ENCODE measurements at regions of chr1 and their contacts with region 1.

Region 1: DNA sequence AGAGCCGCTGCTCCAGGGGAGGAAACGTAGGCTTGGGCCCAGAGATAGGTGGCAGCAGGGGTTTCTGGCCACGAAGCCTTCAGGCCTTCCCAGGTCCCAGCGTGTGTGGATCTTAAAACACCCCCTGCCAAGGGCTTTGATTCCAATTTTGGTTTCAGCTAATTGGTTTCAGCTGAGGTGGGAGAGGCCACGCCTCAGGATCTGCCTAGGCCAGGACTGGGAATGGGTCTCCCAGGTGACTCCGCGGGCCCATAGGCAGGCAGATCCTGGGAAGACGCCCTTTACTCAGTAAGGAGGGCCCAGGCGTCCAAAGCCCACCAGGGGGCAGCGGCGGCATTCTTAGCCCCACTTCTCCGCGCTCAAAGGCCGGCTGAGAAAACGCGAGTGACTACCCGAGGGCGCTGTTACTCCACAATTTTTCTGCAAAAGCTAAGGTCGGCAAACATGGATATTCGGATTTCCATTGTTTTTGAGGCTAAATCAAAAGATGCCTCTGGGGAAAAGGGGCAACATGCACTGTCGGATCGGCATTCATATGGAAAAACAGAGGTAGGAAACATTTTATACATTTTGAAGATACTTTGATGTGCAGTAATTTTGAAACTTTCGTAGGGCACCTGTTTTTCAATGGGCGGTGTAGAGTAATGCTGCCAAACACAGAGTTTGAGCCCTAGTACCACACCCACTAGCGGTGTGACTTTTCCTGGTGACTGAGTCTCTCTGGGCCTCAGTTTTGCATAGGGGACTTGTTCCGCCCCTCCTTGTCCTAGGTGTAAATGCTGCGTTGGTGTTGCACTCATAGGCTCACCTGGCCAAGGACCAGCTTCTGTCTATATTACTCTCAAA is 31.8 kb upstream of the BCL10 start:
- DNase-seq: peak; percentile 88
- ATAC-seq: peak; percentile 98

Region 2: GRCh38 chr1:85398391-85399064 is 90.3 kb after region 1 on chr1:
- intact Hi-C with region 1: loop called (anchors 1 kb)
- DNase-seq: no peak
- ATAC-seq: peak; percentile 39

Region 3: GRCh38 chr1:85502625-85503083 is 194.4 kb after region 1 on chr1:
- intact Hi-C with region 1: loop called (anchors 1 kb)
- DNase-seq: no peak
- ATAC-seq: peak; percentile 85

Measured in Right ventricle myocardium inferior (tissue), 1 donor.